CD4-positive, alpha-beta memory T cell (primary cell): ENCODE measurements at regions of chr20 and their contacts with region 1.

Region 1: DNA sequence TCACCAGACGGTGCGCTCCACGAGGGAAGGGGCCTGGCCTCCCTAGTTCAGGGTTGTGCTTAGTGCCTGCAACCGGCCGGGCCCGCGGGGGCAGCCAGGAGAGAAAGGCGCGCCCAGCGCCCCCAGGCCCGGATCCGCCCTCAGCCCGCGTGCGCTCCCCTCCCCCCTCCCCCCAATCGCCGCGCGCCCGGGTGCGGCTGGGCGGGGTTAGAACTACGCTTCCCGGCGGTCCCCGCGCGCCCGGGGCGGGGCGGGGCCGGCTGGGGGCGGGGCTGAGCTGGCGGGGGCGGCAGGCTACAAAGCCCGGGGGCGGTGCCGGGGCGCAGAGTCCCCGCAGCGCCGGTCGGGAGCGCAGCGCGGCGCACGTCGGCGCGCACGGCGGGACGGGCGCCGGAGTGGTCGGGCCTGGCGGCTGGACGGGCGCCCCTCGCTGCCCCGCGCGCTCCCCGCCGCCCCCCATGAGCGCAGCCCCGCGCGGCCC is at the start of gene RBM38:
- DNase-seq: peak; percentile 56 to 78 (median 72)
- H3K4me3 ChIP-seq: peak within 1 kb of the TSS; percentile 81 to 99
- H3K4me3 Mint-ChIP-seq: peak within 1 kb of the TSS; percentile 91 to 100 (median 97)
- H3K27ac ChIP-seq: peak within 1 kb of the TSS; percentile 84
- H3K27ac Mint-ChIP-seq: peak within 1 kb of the TSS; percentile 97 to 100 (median 99)
- H3K4me1 ChIP-seq: peaks cover 50% of the 10 kb centered on the region
- H3K4me1 Mint-ChIP-seq: peaks cover 29 to 64% (median 41%) of the 10 kb centered on the region in 4 donors
- H3K27me3 ChIP-seq: no peaks in the 10 kb centered on the region
- H3K27me3 Mint-ChIP-seq: no peaks in the 10 kb centered on the region
- total RNA-seq, gene RBM38: 76.0 to 79.6 TPM

Region 2: GRCh38 chr20:56411759-56412472 is 979.2 kb before region 1 on chr20 and contains the start of gene CASS4:
- CTCF ChIA-PET with region 1: no interaction called
- POLR2A ChIA-PET with region 1: no interaction called
- intact Hi-C with region 1: loop called (anchors 10 kb)
- DNase-seq: peak; percentile 63 to 74 (median 68)
- H3K4me3 ChIP-seq: peak within 1 kb of the TSS; percentile 24 to 67
- H3K4me3 Mint-ChIP-seq: peak within 1 kb of the TSS; percentile 90 to 98 (median 94)
- H3K27ac ChIP-seq: peak within 1 kb of the TSS; percentile 80
- H3K27ac Mint-ChIP-seq: peak within 1 kb of the TSS; percentile 94 to 99 (median 98)
- H3K4me1 ChIP-seq: peaks cover 59% of the 10 kb centered on the region
- H3K4me1 Mint-ChIP-seq: peaks cover 33 to 66% (median 48%) of the 10 kb centered on the region in 4 donors
- H3K27me3 ChIP-seq: no peaks in the 10 kb centered on the region
- H3K27me3 Mint-ChIP-seq: no peaks in the 10 kb centered on the region
- total RNA-seq, gene CASS4: 10.8 to 10.9 TPM

Region 3: GRCh38 chr20:57308813-57309271 is 82.3 kb before region 1 on chr20:
- CTCF ChIA-PET with region 1: no interaction called
- POLR2A ChIA-PET with region 1: no interaction called
- intact Hi-C with region 1: no loop called
- DNase-seq: no peak
- H3K4me3 ChIP-seq: no peak overlapping the region
- H3K4me3 Mint-ChIP-seq: no peak overlapping the region
- H3K27ac ChIP-seq: no peak overlapping the region
- H3K27ac Mint-ChIP-seq: no peak overlapping the region
- H3K4me1 ChIP-seq: no peaks in the 10 kb centered on the region
- H3K4me1 Mint-ChIP-seq: no peaks in the 10 kb centered on the region
- H3K27me3 ChIP-seq: no peaks in the 10 kb centered on the region
- H3K27me3 Mint-ChIP-seq: peaks cover 9 to 11% of the 10 kb centered on the region in 2 donors

Region 4: DNA sequence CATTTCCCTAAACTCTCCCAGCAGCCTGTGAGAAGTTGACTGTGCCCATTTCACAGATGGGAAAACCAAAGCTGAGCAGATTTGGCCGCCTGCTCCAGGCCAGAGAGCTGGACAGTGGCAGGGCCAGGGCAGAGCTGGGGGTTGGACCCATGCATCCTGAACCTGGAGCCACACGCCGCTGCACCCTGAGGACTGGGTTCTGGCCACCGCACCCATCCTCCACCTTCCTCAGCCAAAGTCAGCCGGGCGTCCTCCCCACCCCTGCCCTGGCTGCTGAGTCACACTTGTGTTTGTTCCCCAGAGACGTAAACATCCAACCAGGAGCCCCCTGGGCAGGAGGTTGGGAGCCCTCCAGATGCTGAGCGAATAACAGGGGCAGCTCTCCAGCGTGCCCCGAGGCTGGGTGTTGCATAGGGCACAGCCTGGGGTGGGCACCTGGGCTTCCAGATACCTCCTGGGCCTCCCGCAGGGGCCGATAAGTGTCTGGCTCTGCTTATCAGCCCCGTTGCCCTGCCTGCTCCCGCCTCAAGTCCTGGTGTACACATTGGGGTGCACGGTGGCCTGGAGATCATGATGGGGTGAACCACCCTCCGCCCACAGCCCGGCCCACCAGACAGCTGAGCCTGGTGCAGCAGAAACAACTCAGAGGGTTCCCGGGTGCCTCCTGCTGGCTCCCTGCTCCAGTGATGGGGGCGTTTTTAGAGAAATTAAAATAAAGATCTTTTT is 23.9 kb after region 1 on chr20:
- CTCF ChIA-PET with region 1: interaction called, 3 read pairs
- POLR2A ChIA-PET with region 1: interaction called, 17 read pairs
- intact Hi-C with region 1: no loop called
- DNase-seq: no peak
- H3K4me3 ChIP-seq: no peak overlapping the region
- H3K4me3 Mint-ChIP-seq: no peak overlapping the region
- H3K27ac ChIP-seq: no peak overlapping the region
- H3K27ac Mint-ChIP-seq: peak overlapping the region in 1 of 7 donors; percentile 50
- H3K4me1 ChIP-seq: peaks cover 20% of the 10 kb centered on the region
- H3K4me1 Mint-ChIP-seq: peaks cover 10 to 19% (median 14%) of the 10 kb centered on the region in 4 donors
- H3K27me3 ChIP-seq: no peaks in the 10 kb centered on the region
- H3K27me3 Mint-ChIP-seq: no peaks in the 10 kb centered on the region

Region 5: GRCh38 chr20:57493091-57493615 is 102.0 kb after region 1 on chr20:
- CTCF ChIA-PET with region 1: interaction called, 23 read pairs
- POLR2A ChIA-PET with region 1: interaction called, 3 read pairs
- intact Hi-C with region 1: no loop called
- DNase-seq: no peak
- H3K4me3 ChIP-seq: no peak overlapping the region
- H3K4me3 Mint-ChIP-seq: no peak overlapping the region
- H3K27ac ChIP-seq: no peak overlapping the region
- H3K27ac Mint-ChIP-seq: no peak overlapping the region
- H3K4me1 ChIP-seq: peaks cover 4% of the 10 kb centered on the region
- H3K4me1 Mint-ChIP-seq: peaks cover 4 to 7% (median 5%) of the 10 kb centered on the region in 4 donors
- H3K27me3 ChIP-seq: no peaks in the 10 kb centered on the region
- H3K27me3 Mint-ChIP-seq: peaks cover 10 to 14% of the 10 kb centered on the region in 2 donors

Region 6: GRCh38 chr20:57546956-57547649 is 156.0 kb after region 1 on chr20:
- CTCF ChIA-PET with region 1: no interaction called
- POLR2A ChIA-PET with region 1: no interaction called
- intact Hi-C with region 1: no loop called
- DNase-seq: no peak
- H3K4me3 ChIP-seq: no peak overlapping the region
- H3K4me3 Mint-ChIP-seq: no peak overlapping the region
- H3K27ac ChIP-seq: no peak overlapping the region
- H3K27ac Mint-ChIP-seq: no peak overlapping the region
- H3K4me1 ChIP-seq: no peaks in the 10 kb centered on the region
- H3K4me1 Mint-ChIP-seq: peaks cover 0 to 2% (median 0%) of the 10 kb centered on the region in 4 donors
- H3K27me3 ChIP-seq: no peaks in the 10 kb centered on the region
- H3K27me3 Mint-ChIP-seq: peaks cover 12 to 15% of the 10 kb centered on the region in 2 donors

Region 7: GRCh38 chr20:57709931-57710799 is 319.1 kb after region 1 on chr20 and contains the start of gene PMEPA1:
- CTCF ChIA-PET with region 1: no interaction called
- POLR2A ChIA-PET with region 1: interaction called, 4 read pairs
- intact Hi-C with region 1: loop called (anchors 5 kb)
- DNase-seq: peak; percentile 91 to 96 (median 92)
- H3K4me3 ChIP-seq: peak within 1 kb of the TSS; percentile 81 to 87
- H3K4me3 Mint-ChIP-seq: peak within 1 kb of the TSS; percentile 87 to 94 (median 91)
- H3K27ac ChIP-seq: peak within 1 kb of the TSS; percentile 67
- H3K27ac Mint-ChIP-seq: peak within 1 kb of the TSS; percentile 92 to 98 (median 96)
- H3K4me1 ChIP-seq: peaks cover 17% of the 10 kb centered on the region
- H3K4me1 Mint-ChIP-seq: peaks cover 16 to 47% (median 27%) of the 10 kb centered on the region in 4 donors
- H3K27me3 ChIP-seq: no peaks in the 10 kb centered on the region
- H3K27me3 Mint-ChIP-seq: peaks cover 3 to 10% of the 10 kb centered on the region in 2 donors
- total RNA-seq, gene PMEPA1: 8.1 to 8.9 TPM

Region 8: GRCh38 chr20:59165891-59166709 is 1775.0 kb after region 1 on chr20:
- CTCF ChIA-PET with region 1: no interaction called
- POLR2A ChIA-PET with region 1: no interaction called
- intact Hi-C with region 1: loop called (anchors 5 kb)
- DNase-seq: peak; percentile 70 to 83 (median 80)
- H3K4me3 ChIP-seq: peak overlapping the region; percentile 61 to 64
- H3K4me3 Mint-ChIP-seq: peak overlapping the region; percentile 84 to 96 (median 88)
- H3K27ac ChIP-seq: peak overlapping the region; percentile 97
- H3K27ac Mint-ChIP-seq: peak overlapping the region; percentile 97 to 99 (median 99)
- H3K4me1 ChIP-seq: peaks cover 88% of the 10 kb centered on the region
- H3K4me1 Mint-ChIP-seq: peaks cover 72 to 98% (median 82%) of the 10 kb centered on the region in 4 donors
- H3K27me3 ChIP-seq: no peaks in the 10 kb centered on the region
- H3K27me3 Mint-ChIP-seq: no peaks in the 10 kb centered on the region